K562 (cell line): ENCODE measurements at regions of chr10 and their contacts with region 1.

Region 1: GRCh38 chr10:32445740-32446535 is at the start of gene CCDC7:
- DNase-seq: peak; percentile 77 to 93 (median 82)
- ATAC-seq: peak; percentile 97
- H3K4me3 ChIP-seq: peak within 1 kb of the TSS; percentile 51
- H3K27ac ChIP-seq: peak within 1 kb of the TSS; percentile 96
- H3K4me1 ChIP-seq: no peaks in the 10 kb centered on the region; a peak in 1 of 5 replicates
- H3K27me3 ChIP-seq: no peaks in the 10 kb centered on the region
- CTCF ChIP-seq: peak; percentile 61 to 81 (median 77); a peak in 5 of 6 replicates
- EP300 ChIP-seq: no peak; the same call in 1 of the 2 replicates
- POLR2A ChIP-seq: peak; percentile 90
- RAD21 ChIP-seq: peak; percentile 45 to 63
- polyA plus RNA-seq, gene CCDC7: 1.5 to 2.7 TPM

Region 2: DNA sequence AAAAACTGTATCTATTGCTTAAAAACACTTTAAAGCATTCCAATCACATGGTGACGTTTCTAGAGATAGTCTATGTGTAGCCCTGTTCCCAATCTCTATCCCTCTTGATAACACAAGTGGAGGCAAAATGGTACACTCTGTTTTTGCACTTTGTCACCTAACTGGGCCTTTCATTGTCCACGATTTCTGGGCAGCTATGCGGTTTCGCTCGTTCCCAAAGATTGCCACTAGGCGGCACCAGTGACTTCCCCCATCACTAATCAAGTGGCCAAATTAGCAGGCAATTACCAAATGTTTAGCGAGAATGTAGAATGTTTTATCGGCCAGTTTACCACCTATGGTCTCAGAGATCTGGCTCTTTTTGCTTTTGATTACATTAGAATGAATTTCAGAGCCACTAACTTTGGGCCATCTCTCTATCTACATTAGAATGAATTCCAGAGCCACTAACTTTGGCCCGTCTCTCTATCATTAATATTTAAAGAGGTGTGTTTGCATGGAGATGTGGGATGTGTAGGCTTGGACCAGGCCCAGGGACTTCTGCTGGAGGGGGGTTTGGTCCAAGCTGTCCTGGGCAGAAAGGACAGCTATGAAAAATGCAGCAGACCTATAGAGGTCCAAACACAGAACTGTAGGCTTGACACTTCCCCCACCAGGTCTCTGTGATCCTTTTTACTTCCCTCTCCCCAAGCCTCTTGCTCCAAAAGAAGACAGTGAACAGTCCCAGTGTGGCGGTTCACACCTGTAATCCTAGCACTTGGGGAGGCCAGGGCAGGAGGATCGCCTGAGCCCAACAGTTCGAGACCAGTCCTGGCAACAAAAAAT is 189.1 kb before region 1 on chr10:
- CTCF ChIA-PET with region 1: no interaction called
- POLR2A ChIA-PET with region 1: interaction called, 3 read pairs
- in situ Hi-C with region 1: no loop called
- intact Hi-C with region 1: loop called (anchors 5 kb)
- DNase-seq: peak; percentile 56 to 78 (median 63)
- ATAC-seq: peak; percentile 80
- H3K4me3 ChIP-seq: no peak overlapping the region
- H3K27ac ChIP-seq: no peak overlapping the region
- H3K4me1 ChIP-seq: peaks cover 6 to 13% of the 10 kb centered on the region in 2 experiments; a peak in 2 of 5 replicates
- H3K27me3 ChIP-seq: no peaks in the 10 kb centered on the region
- CTCF ChIP-seq: peak; percentile 83 to 94 (median 89)
- EP300 ChIP-seq: no peak
- POLR2A ChIP-seq: no peak
- RAD21 ChIP-seq: peak; percentile 66 to 82

Region 3: DNA sequence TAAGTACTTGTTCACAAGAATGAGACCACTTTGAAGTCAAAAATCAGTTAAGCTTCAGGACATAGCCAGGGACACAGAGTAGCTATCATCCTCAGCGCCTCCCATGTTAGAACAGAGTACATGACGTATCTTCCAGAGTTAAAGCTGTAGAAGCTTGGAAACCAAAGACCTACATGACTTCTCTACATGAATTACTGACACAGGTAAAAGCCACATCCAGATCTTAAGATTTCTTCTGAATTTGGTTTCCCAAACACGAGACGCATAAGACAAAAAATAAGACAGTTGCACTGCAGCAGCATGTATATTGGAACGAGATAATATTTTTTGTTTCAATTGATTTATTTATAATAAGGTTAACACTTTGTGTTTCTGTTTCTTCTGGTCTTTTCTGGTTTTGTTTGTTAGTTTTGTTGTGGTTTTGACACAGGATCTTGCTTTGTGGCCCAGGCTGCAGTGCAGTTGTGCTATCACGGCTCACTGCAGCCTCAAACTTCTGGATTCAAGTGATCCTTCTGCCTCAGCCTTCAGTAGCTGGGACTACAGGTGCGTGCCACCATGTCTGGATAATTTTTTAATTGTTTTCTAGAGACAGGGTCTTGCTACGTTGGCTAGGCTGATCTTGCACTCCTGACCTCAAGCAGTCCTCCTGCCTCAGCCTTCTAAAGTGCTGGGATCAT is 88.7 kb before region 1 on chr10:
- CTCF ChIA-PET with region 1: no interaction called
- POLR2A ChIA-PET with region 1: no interaction called
- in situ Hi-C with region 1: no loop called
- intact Hi-C with region 1: no loop called
- DNase-seq: no peak
- ATAC-seq: no peak
- H3K4me3 ChIP-seq: no peak overlapping the region
- H3K27ac ChIP-seq: no peak overlapping the region
- H3K4me1 ChIP-seq: peaks cover 6 to 13% of the 10 kb centered on the region in 2 experiments; a peak in 3 of 5 replicates
- H3K27me3 ChIP-seq: no peaks in the 10 kb centered on the region
- CTCF ChIP-seq: no peak
- EP300 ChIP-seq: no peak
- POLR2A ChIP-seq: no peak
- RAD21 ChIP-seq: no peak

Region 4: GRCh38 chr10:32393911-32394310 is 52.0 kb before region 1 on chr10:
- CTCF ChIA-PET with region 1: no interaction called
- POLR2A ChIA-PET with region 1: no interaction called
- in situ Hi-C with region 1: loop called (anchors 5 kb)
- intact Hi-C with region 1: no loop called
- DNase-seq: no peak
- ATAC-seq: no peak
- H3K4me3 ChIP-seq: no peak overlapping the region
- H3K27ac ChIP-seq: no peak overlapping the region
- H3K4me1 ChIP-seq: no peaks in the 10 kb centered on the region
- H3K27me3 ChIP-seq: no peaks in the 10 kb centered on the region
- CTCF ChIP-seq: no peak
- EP300 ChIP-seq: no peak
- POLR2A ChIP-seq: no peak
- RAD21 ChIP-seq: no peak

Region 5: GRCh38 chr10:32501896-32502295 is 56.0 kb after region 1 on chr10:
- CTCF ChIA-PET with region 1: no interaction called
- POLR2A ChIA-PET with region 1: interaction called, 3 read pairs
- in situ Hi-C with region 1: no loop called
- intact Hi-C with region 1: loop called (anchors 5 kb)
- DNase-seq: peak; percentile 14 to 90 (median 47)
- ATAC-seq: peak; percentile 99
- H3K4me3 ChIP-seq: peak overlapping the region; percentile 21; the same call in 1 of the 2 replicates
- H3K27ac ChIP-seq: peak overlapping the region; percentile 74; the same call in 2 of the 3 replicates
- H3K4me1 ChIP-seq: peaks cover 0 to 10% of the 10 kb centered on the region in 2 experiments; a peak in 3 of 5 replicates
- H3K27me3 ChIP-seq: no peaks in the 10 kb centered on the region
- CTCF ChIP-seq: no peak
- EP300 ChIP-seq: peak; percentile 82; the same call in 1 of the 2 replicates
- POLR2A ChIP-seq: no peak
- RAD21 ChIP-seq: peak in 1 of 2 experiments; percentile 17; a peak in 1 of 4 replicates